GM18951 (cell line): ENCODE measurements at regions of chr3 and their contacts with region 1.

Region 1: DNA sequence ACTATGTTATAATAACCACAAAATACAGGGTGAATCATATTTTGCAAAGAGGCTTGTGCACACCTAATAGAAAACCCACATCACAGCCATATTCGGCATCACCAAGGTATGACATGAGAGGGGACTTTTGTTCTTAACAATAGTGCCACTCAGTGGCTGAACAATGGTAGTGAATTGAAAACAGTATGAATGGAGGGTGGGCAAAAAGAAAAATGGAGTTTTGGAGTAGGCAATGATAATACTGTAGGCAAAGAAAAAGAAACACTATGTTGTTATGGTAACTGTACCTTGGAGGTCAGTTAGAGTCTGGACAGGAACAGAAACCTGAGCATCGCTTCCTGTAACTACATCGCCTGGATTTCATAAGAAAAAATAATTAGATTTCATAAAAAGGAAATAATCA is 348.6 kb downstream of the PLCL2 start:
- POLR2A ChIP-seq: no peak

Region 2: GRCh38 chr3:16290007-16290826 is 943.2 kb before region 1 on chr3:
- in situ Hi-C with region 1: loop called (anchors 25 kb)
- POLR2A ChIP-seq: no peak

Region 3: GRCh38 chr3:16600780-16601539 is 632.4 kb before region 1 on chr3:
- in situ Hi-C with region 1: loop called (anchors 10 kb)
- POLR2A ChIP-seq: no peak

Region 4: GRCh38 chr3:16849229-16849628 is 384.2 kb before region 1 on chr3:
- in situ Hi-C with region 1: loop called (anchors 25 kb)
- POLR2A ChIP-seq: no peak